MCF 10A (cell line): ENCODE measurements at regions of chr16 and their contacts with region 1.

Region 1: DNA sequence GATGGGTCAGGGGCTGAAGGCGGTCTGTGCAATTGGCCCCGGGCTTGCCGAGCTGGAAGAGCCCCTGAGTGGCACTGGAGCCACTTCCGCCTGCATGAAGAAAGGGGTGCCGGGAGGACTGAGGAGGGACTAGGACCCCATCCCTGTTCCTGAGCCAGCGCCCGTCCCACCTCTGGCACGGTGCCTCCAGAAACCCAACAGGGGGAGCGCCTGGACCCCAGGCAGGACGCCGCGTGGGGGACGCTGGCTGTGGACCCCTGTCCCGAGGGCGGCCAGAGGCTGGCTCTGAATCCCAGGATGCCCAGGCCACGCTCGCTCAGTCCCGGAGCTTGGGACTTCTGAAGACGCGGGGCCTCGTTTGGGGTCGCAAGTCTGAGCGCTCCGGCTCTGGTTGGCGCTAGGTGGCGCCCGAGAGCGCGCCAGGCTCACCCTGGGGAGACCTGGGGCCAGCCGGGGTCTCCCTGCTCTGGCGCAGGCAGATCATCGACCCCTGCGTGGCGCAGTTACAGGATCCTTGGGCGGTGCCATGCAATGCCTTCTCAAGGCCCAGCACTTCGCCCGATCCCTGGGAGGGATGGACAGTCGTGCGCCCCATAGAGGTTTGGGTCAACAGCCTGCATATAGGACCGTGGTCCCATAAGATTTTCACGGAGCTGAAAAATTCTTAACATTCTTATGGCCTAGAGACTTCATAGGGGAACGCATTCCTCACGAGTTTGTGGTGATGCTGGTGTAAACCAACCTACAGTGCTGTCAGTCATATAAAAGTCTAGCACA is 58.5 kb upstream of the CREBBP start:
- DNase-seq: peak; percentile 41
- H3K4me3 Mint-ChIP-seq: no peak overlapping the region
- H3K27ac Mint-ChIP-seq: no peak overlapping the region
- H3K4me1 Mint-ChIP-seq: no peaks in the 10 kb centered on the region
- H3K27me3 Mint-ChIP-seq: no peaks in the 10 kb centered on the region
- CTCF ChIP-seq: peak; percentile 95

Region 2: DNA sequence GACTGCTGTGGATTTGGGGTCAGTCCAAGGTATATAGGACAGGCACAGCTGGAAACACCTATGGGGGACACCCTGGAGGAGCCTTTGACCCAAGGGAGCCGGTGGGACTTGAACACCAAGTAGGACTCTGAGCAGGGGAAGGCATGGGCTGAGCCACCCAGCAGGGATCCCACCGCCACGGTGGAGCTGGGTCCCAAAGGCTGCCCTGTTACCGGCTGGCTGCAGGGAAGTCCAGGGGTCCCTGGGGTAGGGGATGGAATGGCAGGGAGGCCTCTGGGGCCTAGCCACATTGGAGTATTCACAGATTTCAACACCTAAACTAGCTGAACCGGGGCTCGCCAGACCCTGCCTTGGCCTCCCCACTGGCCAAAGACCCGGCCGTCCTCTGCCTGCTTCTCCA is 18.8 kb before region 1 on chr16:
- CTCF ChIA-PET with region 1: interaction called, 15 read pairs
- POLR2A ChIA-PET with region 1: no interaction called
- intact Hi-C with region 1: no loop called
- DNase-seq: no peak
- H3K4me3 Mint-ChIP-seq: no peak overlapping the region
- H3K27ac Mint-ChIP-seq: no peak overlapping the region
- H3K4me1 Mint-ChIP-seq: no peaks in the 10 kb centered on the region
- H3K27me3 Mint-ChIP-seq: no peaks in the 10 kb centered on the region
- CTCF ChIP-seq: no peak

Region 3: GRCh38 chr16:3950343-3951193 is 11.5 kb after region 1 on chr16:
- CTCF ChIA-PET with region 1: interaction called, 23 read pairs
- POLR2A ChIA-PET with region 1: interaction called, 3 read pairs
- intact Hi-C with region 1: no loop called
- DNase-seq: peak; percentile 95
- H3K4me3 Mint-ChIP-seq: peak overlapping the region; percentile 38
- H3K27ac Mint-ChIP-seq: peak overlapping the region; percentile 68
- H3K4me1 Mint-ChIP-seq: peaks cover 22% of the 10 kb centered on the region
- H3K27me3 Mint-ChIP-seq: peaks cover 10% of the 10 kb centered on the region
- CTCF ChIP-seq: no peak

Region 4: GRCh38 chr16:3988824-3989223 is 49.8 kb after region 1 on chr16:
- CTCF ChIA-PET with region 1: no interaction called
- POLR2A ChIA-PET with region 1: no interaction called
- intact Hi-C with region 1: no loop called
- DNase-seq: no peak
- H3K4me3 Mint-ChIP-seq: no peak overlapping the region
- H3K27ac Mint-ChIP-seq: no peak overlapping the region
- H3K4me1 Mint-ChIP-seq: no peaks in the 10 kb centered on the region
- H3K27me3 Mint-ChIP-seq: no peaks in the 10 kb centered on the region
- CTCF ChIP-seq: no peak